ENCODE measurements at regions of chr4 and their contacts with region 1.

Region 1: DNA sequence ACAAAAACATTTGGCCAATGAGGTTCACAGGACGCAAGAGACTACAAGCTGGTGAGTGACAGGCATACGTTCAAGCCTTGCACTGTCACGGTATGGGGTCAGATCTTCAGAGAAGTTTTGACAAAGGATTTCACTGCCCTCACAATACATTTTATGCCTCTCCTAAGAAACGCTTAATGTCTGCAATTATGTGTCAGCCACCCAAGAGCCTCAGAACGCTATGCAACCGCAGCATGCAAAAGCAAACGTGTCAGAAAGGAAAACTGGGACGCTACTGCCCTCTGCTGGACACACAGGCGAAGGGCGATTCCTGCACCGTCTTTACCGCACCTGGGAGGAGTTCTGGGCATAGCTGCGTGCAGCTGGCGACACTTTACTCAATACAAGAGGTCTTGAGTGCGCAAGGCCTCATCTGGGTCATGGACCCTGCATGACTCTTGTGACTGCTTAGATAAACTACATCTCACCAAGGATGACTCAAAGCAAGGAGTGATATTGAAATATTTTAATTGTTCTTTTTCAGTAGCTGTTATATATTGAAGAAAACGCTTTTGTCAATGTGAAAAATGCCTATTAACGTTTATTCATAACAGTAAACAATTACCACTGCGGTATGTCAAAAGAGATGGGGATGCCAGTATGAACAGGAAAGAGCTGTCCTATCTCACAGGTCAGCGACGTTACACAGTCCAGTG is 147.6 kb upstream of the FRG1 start:
- DNase-seq: no peak

Region 2: GRCh38 chr4:189436207-189436606 is 356.9 kb before region 1 on chr4:
- intact Hi-C with region 1: loop called (anchors 5 kb)
- DNase-seq: no peak